ENCODE measurements at regions of chr15 and their contacts with region 1.

Region 1: DNA sequence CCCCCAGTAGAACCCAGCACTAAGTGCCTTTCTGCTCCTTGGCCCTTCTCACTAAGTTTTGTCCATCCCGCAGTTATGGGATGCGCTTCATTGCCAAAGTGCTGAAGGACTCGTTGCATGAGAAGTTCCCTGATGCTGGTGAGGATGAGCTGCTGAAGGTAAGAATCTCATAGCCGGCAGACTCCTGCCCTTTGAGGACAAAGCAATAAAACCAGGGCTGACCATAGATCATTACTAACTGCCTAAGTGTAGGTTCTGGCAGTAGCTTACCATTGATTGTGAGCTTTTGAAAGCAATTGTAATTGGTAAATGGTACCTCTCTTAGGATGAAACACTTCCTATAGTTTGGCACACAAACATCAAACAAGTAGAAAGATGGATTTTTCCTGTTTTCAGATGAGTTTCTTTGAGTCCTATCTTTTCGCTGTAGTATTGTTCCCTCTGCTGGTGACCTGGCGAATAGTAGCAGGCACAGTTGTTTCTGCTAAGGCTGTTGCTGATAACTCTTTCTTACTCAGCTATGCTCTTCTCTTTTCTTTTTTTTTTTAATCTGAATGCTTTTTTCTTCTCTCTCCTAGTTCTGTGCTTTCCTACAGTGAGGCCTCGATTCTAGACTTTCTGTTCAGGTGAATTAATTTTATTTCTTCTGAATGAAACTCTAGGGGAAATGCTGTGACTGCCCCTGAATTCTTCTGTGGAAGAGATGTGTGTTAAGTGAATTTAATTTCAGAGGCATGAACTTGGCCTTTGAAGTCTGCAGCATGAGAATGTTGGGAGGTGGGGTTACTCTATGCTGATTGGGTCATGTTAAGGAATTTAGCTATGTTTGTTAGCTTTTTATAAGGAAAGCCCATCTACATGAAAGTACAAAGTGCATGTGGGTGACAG is 47.4 kb upstream of the CRTC3 start:
- DNase-seq: no peak
- ATAC-seq: peak; percentile 69
- H3K4me3 ChIP-seq: no peak overlapping the region
- H3K27ac ChIP-seq: no peak overlapping the region
- H3K4me1 ChIP-seq: no peaks in the 10 kb centered on the region
- H3K27me3 ChIP-seq: no peaks in the 10 kb centered on the region
- CTCF ChIP-seq: peak; percentile 52 to 66 (median 53); a peak in 4 of 6 replicates
- EP300 ChIP-seq: no peak
- POLR2A ChIP-seq: no peak
- RAD21 ChIP-seq: peak; percentile 82

Region 2: GRCh38 chr15:90249203-90249863 is 233.0 kb before region 1 on chr15 and contains the start of gene TTLL13:
- CTCF ChIA-PET with region 1: no interaction called
- POLR2A ChIA-PET with region 1: no interaction called
- RAD21 ChIA-PET with region 1: no interaction called
- SMC1A ChIA-PET with region 1: no interaction called
- in situ Hi-C with region 1: no loop called
- intact Hi-C with region 1: no loop called
- DNase-seq: no peak
- ATAC-seq: peak; percentile 95
- H3K4me3 ChIP-seq: peak within 1 kb of the TSS; percentile 55; the same call in 1 of the 2 replicates
- H3K27ac ChIP-seq: no peak within 1 kb of the TSS
- H3K4me1 ChIP-seq: peaks cover 2% of the 10 kb centered on the region; the same call in 1 of the 2 replicates
- H3K27me3 ChIP-seq: peaks cover 0 to 2% of the 10 kb centered on the region in 2 experiments; a peak in 1 of 4 replicates
- CTCF ChIP-seq: no peak
- EP300 ChIP-seq: no peak
- POLR2A ChIP-seq: no peak
- RAD21 ChIP-seq: no peak
- polyA plus RNA-seq, gene TTLL13: 0.03 TPM in 1 of 2 experiments, not detected in the other

Region 3: DNA sequence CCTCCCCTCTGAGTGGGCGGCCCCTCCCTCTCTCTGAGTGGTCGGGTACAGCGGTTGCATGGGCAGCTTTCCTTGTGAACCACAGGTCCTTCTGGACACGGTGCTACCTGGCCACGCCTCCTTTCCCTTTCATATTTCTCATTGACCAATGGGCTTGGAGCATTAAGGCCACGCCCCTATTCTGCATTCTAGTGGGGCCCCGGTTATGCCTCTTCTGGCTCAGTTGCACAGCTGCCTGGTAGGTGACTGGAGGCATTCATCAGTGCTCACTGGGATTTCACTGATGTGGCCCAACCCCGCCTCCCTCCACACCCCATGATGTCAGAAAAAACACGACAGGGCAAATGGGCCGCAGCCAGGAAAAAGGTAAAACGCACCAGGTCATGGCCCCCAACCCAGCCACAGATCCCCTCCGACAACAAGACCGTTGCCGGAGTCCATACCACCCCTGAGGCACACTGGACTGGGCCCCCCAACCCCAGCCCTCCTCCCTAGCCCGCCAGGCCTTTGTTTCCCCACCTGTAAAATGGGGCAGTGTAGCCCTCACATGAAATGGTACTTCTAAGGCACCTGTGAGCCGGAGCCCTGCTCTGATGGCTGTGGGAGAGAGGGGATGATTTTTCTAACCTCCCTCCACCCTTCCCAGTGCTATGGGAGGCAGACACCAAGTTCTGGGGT is 190.6 kb before region 1 on chr15:
- CTCF ChIA-PET with region 1: interaction called, 20 read pairs
- POLR2A ChIA-PET with region 1: no interaction called
- RAD21 ChIA-PET with region 1: interaction called, 18 read pairs
- SMC1A ChIA-PET with region 1: interaction called, 13 read pairs
- in situ Hi-C with region 1: no loop called
- intact Hi-C with region 1: no loop called
- DNase-seq: no peak
- ATAC-seq: peak; percentile 69
- H3K4me3 ChIP-seq: no peak overlapping the region
- H3K27ac ChIP-seq: no peak overlapping the region
- H3K4me1 ChIP-seq: no peaks in the 10 kb centered on the region
- H3K27me3 ChIP-seq: no peaks in the 10 kb centered on the region
- CTCF ChIP-seq: no peak
- EP300 ChIP-seq: no peak
- POLR2A ChIP-seq: no peak
- RAD21 ChIP-seq: no peak

Region 4: DNA sequence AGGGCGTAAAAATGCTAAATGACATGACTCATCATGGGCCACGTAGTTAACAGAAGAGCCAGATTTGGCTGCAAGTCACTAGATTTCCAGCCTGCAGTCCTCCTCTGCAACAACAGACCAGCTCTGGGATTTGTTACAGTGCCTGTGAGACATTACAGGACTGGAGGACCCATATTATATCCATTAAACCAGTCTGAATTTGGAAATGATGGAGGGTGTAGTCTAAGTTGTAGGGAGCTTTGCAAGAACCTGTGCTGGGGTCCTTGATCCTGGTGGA is 119.5 kb before region 1 on chr15:
- CTCF ChIA-PET with region 1: interaction called, 49 read pairs
- POLR2A ChIA-PET with region 1: no interaction called
- RAD21 ChIA-PET with region 1: interaction called, 13 read pairs
- SMC1A ChIA-PET with region 1: interaction called, 27 read pairs
- in situ Hi-C with region 1: no loop called
- intact Hi-C with region 1: loop called (anchors 2 kb)
- DNase-seq: no peak
- ATAC-seq: no peak
- H3K4me3 ChIP-seq: no peak overlapping the region
- H3K27ac ChIP-seq: no peak overlapping the region
- H3K4me1 ChIP-seq: no peaks in the 10 kb centered on the region
- H3K27me3 ChIP-seq: no peaks in the 10 kb centered on the region
- CTCF ChIP-seq: no peak
- EP300 ChIP-seq: no peak
- POLR2A ChIP-seq: no peak
- RAD21 ChIP-seq: no peak

Region 5: DNA sequence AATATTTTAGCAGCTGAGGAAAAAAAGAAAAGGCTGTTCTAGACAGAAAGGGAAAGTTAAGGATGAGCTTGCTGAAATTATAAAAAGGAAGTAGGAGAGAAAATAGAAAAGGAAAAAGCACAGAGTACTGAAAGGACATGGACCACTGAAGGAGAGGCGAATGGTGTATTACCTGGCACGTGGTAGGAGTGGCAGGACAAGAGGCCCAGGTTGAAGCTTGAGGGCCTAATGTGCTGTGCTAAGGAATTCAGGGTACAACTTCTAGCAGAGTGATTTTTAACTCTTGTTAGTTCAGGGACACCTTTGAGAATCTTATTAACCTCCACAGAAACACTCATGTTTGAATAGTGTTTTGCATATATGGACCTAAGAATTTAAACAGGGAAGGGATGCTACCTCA is 12.6 kb before region 1 on chr15:
- CTCF ChIA-PET with region 1: interaction called, 13 read pairs
- POLR2A ChIA-PET with region 1: interaction called, 3 read pairs
- RAD21 ChIA-PET with region 1: interaction called, 4 read pairs
- SMC1A ChIA-PET with region 1: interaction called, 23 read pairs
- in situ Hi-C with region 1: no loop called
- intact Hi-C with region 1: no loop called
- DNase-seq: no peak
- ATAC-seq: no peak
- H3K4me3 ChIP-seq: no peak overlapping the region
- H3K27ac ChIP-seq: no peak overlapping the region
- H3K4me1 ChIP-seq: no peaks in the 10 kb centered on the region
- H3K27me3 ChIP-seq: no peaks in the 10 kb centered on the region
- CTCF ChIP-seq: no peak
- EP300 ChIP-seq: no peak
- POLR2A ChIP-seq: no peak
- RAD21 ChIP-seq: no peak

Region 6: DNA sequence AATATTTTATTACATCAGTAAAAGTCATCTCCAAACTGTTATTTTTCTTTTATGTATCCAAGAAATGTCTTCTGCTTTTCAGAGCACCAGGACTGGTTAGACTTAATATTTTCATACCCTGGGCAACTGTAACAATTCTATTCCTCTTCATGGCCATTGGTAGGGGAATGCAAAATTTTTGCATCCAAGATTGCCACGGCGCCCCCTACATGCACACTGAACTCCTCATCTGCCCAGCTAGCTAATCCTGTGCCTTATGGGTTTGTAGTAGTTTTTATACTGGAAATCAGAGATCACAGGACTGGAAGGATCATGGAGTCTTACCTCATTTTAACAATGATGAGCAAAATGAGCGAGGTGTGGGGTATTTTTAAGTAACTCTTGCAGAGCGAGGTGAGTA is 121.5 kb after region 1 on chr15:
- CTCF ChIA-PET with region 1: interaction called, 14 read pairs
- POLR2A ChIA-PET with region 1: no interaction called
- RAD21 ChIA-PET with region 1: no interaction called
- SMC1A ChIA-PET with region 1: interaction called, 7 read pairs
- in situ Hi-C with region 1: no loop called
- intact Hi-C with region 1: no loop called
- DNase-seq: no peak
- ATAC-seq: peak; percentile 77
- H3K4me3 ChIP-seq: no peak overlapping the region
- H3K27ac ChIP-seq: no peak overlapping the region
- H3K4me1 ChIP-seq: peaks cover 3% of the 10 kb centered on the region
- H3K27me3 ChIP-seq: no peaks in the 10 kb centered on the region
- CTCF ChIP-seq: peak; percentile 39 to 49 (median 41); a peak in 5 of 6 replicates
- EP300 ChIP-seq: no peak
- POLR2A ChIP-seq: no peak
- RAD21 ChIP-seq: peak; percentile 51